Posterior cingulate gyrus (tissue), 11 donors: ENCODE measurements at regions of chr22 and their contacts with region 1.

Region 1: DNA sequence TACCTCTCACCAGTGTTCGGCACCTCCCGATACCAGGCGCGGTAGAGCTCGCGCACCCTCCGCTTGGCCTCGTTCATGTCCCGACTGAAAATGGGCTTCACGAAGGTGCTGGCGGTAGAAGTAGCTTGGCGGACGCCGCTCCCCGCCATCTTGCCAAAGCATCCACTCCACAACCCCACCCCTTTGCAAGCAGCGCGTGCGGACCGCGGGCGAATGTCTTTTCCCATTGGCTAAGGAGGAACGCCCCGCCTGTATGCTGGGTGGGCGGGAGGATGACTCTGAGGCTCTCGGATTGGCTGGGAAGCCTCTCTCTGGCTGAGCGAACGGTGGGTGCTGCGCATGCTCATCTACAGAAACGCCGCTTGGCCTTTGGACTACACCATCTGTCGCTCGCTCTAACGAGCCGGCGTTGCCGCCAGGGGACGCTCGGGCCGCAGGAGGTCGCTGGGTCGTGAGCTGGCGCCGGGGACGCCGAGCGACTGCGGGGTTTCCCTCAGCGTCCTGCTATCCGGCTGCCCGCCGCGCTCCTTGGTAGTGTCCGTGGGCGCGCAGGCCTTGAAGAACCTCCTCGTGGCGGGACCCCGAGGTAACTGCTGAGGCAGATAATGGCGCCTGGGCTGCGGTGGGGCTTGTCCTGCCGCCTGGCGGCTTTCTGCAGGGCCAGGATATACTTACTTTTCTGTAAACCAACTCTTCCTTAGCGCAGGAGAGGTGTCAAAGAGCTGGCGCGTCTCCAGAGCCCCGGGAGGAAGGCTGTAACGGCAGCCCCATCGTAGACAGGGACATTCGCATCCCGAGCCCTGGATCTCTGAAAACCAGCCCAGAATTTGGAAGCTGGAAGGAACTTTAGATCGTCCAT is at the start of gene NDUFA6:
- DNase-seq: peak; percentile 98 to 100 (median 99)

Region 2: DNA sequence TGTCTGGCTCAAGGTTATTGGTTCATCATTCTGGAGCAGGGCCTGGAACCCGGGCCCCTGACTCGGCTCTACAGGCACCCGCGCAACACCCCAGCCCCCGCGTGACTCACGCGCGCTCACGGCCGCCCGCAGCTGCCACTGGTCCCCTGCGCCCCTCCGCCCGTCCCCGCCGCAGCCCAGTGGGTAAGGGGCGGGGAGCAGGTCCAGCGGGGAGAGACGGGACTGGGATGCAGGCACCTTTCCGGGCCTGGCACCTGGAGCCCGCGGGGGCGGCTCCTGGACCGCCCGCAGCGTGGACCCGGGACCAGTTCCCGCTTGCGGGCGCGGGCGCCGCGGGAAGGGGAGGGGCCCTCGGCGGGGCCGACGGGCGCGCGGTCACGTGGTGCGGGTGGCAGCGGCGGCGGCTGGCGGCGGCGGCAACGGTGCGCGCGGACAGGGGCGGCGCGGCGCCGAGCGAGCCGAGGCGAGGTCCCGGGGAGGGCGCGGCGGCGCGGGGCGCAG is 114.4 kb before region 1 on chr22:
- intact Hi-C with region 1: loop called (anchors 2 kb)
- DNase-seq: peak in 9 of 10 donors; percentile 55 to 95 (median 68)

Region 3: DNA sequence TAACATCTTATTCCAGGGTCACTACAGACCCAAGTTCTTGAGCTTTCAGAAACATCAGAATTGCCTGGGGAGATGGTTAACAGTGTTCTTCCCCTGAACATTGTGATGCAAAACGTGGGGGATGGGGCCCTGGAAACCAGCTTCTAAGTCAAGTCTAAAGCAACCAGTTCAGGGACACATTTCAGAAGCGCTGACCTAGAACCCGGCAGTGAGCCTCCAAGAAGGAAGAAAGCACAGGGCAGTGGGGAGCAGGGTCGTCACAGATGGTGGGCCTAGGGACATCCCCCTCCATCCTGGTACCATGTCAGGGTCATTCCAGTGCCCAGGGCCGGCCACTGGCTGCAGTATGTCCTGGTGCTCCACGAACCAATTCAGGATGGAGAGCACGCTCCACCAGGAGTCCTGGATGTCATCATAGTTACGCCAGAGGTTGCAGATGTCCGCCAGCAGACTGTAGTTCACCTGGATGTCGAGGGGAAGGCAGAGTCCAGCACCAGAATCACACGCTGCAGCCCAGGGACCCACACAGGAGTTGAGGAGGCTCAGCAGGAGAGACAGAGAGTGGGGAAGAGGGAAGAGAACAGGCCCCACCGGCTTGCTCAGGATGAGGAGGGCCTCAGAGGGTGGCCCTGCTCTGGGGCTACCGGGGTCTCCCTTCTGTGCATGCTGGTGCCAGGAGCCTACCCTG is 25.2 kb before region 1 on chr22:
- intact Hi-C with region 1: no loop called
- DNase-seq: peak in 1 of 10 donors; percentile 51

Region 4: GRCh38 chr22:42079319-42080251 is 11.2 kb before region 1 on chr22 and contains the start of gene SMDT1:
- intact Hi-C with region 1: loop called (anchors 1 kb)
- DNase-seq: peak; percentile 98 to 100 (median 99)

Region 5: DNA sequence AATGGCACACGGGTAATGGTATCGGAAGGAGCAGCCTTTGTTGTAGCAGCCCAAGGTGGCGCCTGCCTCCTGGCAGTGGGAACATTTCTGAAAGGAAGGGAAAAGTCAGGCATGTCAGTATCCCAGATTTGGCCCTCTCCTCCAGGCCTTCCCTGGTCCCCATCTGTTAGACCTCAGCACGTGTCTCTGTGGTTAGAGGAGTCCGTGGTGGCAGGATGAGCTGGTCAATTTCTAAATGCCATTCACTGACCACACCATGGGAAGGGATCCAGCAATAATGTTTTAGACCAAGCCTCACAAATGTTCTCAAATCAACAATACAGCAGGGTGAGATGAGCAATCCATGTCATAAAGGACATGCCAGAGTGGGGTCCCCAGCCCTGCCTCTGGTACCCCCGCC is 88.8 kb after region 1 on chr22:
- intact Hi-C with region 1: loop called (anchors 10 kb)
- DNase-seq: no peak